ENCODE measurements at regions of chr10 and their contacts with region 1.

Region 1: DNA sequence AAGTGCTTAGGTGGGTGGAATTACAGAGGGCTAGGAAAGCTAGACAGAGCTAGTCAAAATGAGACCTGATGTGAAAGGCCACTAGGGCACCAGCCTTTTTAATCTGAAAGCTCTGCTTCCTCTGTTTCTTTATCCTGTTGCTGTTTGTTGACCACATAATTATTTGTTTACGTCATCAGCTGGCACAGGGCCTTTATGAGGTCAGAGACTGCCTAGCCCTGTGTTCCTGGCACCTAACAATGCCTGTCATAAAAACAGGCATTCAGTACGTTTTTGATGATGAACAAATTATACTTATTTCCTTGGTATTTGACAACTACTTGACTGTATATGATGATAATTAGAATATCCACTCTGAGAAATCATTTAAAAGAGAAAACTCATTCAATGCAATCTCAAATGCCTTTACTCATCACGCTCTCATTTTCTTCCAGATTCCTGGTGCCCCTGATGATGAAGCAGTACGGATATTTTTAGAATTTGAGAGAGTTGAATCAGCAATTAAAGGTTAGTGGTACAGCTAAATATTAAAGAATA is 26.0 kb downstream of the RBM17 start:
- DNase-seq: no peak
- H3K4me3 ChIP-seq: no peak overlapping the region
- H3K27ac ChIP-seq: peak overlapping the region; percentile 17 to 71
- H3K4me1 ChIP-seq: peaks cover 0 to 4% of the 10 kb centered on the region in 2 donors
- H3K27me3 ChIP-seq: no peaks in the 10 kb centered on the region
- CTCF ChIP-seq: no peak
- POLR2A ChIP-seq: no peak

Region 2: DNA sequence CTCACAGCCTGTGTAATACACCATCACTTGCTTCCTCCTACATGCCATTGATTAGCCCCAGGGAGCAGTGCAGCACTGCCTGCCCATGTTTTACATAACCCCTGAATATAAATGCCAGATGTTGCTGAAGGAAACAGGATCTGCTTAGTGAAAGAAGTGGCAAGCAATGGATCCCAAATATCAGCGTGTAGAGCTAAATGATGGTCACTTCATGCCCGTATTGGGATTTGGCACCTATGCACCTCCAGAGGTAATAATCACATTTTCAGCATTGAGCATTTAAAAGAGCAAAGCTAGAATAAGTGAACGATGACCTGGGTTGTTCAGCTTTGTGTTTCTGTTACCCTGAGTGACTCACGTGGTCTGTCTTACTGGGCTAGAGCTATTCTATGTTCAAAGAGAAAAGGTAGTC is 918.2 kb before region 1 on chr10 and contains the start of gene AKR1C4:
- intact Hi-C with region 1: no loop called
- DNase-seq: no peak
- H3K4me3 ChIP-seq: no peak within 1 kb of the TSS
- H3K27ac ChIP-seq: no peak within 1 kb of the TSS
- H3K4me1 ChIP-seq: no peaks in the 10 kb centered on the region
- H3K27me3 ChIP-seq: no peaks in the 10 kb centered on the region
- CTCF ChIP-seq: no peak
- POLR2A ChIP-seq: no peak
- total RNA-seq, gene AKR1C4: not detected

Region 3: DNA sequence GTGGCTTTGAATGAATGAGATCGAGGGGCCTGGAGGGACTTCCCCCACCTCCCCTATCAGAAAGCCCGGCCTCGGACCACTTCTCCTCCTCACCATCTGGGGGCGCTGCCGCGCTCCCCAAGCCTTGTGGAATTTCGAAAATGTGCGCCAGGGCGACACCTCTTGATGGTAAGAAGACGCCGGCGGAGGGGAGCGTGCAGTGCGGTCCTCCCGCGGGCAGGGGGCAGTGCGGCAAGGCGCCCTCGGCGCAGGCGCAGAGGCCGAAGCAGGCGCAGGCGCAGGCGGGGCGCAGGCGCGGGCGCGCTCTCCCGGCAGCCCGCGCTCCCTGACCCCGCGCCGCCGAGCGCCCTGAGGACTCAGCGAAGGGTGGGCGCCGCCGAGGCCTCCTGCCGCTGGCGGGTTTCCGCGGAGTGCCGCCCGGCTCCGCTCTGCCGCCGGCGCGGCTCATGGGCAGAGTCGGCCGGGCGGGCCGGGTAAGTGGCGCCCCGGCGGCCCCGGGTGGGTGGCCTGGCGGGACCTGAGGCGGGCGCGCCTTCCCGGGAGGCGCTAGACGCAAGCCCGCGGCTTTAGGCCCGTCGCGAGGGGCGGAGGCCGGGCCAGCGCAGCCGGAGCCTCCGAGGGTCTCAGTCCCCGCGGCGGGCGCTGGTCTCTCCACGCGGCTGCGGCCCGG is 26.0 kb before region 1 on chr10 and contains the start of gene RBM17:
- intact Hi-C with region 1: no loop called
- DNase-seq: peak; percentile 95
- H3K4me3 ChIP-seq: peak within 1 kb of the TSS; percentile 86 to 98 (median 97)
- H3K27ac ChIP-seq: peak within 1 kb of the TSS; percentile 91 to 94
- H3K4me1 ChIP-seq: peaks cover 0 to 3% of the 10 kb centered on the region in 2 donors
- H3K27me3 ChIP-seq: no peaks in the 10 kb centered on the region
- CTCF ChIP-seq: peak; percentile 98 to 100 (median 100)
- POLR2A ChIP-seq: no peak
- total RNA-seq, gene RBM17: 62.4 to 72.4 (median 68.2) TPM

Region 4: DNA sequence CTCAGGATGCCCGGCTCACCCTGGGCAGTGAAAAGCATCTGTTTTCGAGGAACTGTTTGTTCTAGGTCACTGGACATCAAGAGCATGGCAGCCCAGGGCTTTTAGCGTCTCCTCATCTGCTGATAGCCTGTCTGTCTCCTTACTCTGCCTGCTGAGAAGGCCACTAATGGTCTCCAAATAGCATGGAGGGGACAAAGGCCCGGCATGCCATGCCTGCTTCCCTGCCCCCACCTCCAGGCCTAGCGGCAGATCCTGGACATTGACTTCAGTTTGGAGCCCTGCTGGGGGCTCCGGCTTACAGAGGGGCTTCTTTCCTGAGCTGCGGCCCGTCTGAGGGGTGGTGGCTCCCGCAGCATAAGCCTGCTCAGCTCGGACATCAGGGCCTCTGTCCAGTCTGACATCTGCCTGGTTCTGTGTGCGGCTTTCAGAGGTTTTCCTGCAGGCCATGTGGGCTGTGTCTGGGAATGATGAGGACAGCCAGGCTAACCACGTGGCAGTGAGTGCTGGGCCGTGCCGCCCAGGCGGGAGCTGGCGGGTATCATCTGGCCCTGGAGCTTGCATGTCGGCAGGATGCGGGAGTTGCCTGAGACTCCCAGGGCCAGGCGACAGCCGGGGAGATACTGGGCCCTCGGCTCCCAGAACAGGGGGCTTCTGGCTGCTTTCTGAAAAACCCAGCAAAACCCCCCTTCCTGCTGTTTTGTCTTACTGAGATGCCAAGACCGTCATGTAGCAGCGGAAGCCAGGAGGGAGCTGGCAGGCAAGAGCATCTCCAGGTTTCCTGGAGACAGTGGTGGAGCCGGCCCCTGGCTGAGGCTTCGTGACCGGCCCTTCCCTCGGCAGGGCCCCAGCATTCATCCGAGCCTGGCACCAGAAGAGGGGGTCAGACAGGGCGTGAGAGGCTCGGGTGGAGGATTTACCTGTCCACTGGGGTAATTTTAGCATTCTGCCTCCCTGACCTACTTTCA is 97.1 kb after region 1 on chr10:
- intact Hi-C with region 1: loop called (anchors 10 kb)
- DNase-seq: no peak
- H3K4me3 ChIP-seq: no peak overlapping the region
- H3K27ac ChIP-seq: peak overlapping the region; percentile 48 to 50
- H3K4me1 ChIP-seq: peaks cover 4 to 5% of the 10 kb centered on the region in 2 donors
- H3K27me3 ChIP-seq: no peaks in the 10 kb centered on the region
- CTCF ChIP-seq: no peak
- POLR2A ChIP-seq: no peak